ENCODE measurements at regions of chr3 and their contacts with region 1.

Region 1: DNA sequence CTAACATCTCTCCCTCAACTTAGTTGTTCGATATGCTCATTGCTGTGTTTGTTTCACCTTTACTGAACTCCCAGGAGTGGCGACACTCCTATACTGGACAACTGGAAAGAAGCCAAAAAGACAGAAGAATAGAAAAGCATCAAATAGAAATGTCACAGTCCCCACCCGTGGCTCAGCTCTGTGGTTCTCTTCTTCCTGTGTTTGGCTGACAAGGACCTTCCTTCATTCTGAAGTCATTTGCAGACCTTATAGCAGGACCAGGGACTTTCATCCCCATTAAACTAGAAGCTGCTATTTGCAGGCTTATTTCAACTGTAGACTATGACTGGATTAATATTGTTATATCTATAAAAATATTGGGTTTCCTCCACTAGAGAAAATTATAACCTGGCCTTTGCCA is 125.9 kb downstream of the NECTIN3 start:
- DNase-seq: no peak
- ATAC-seq: no peak
- H3K4me3 ChIP-seq: no peak overlapping the region
- H3K4me3 Mint-ChIP-seq: no peak overlapping the region
- H3K27ac ChIP-seq: no peak overlapping the region
- H3K27ac Mint-ChIP-seq: no peak overlapping the region
- H3K4me1 ChIP-seq: peaks cover 3% of the 10 kb centered on the region
- H3K4me1 Mint-ChIP-seq: peaks cover 6% of the 10 kb centered on the region
- H3K27me3 ChIP-seq: no peaks in the 10 kb centered on the region
- H3K27me3 Mint-ChIP-seq: no peaks in the 10 kb centered on the region
- CTCF ChIP-seq: no peak

Region 2: GRCh38 chr3:111238885-111239284 is 41.4 kb after region 1 on chr3:
- CTCF ChIA-PET with region 1: no interaction called
- POLR2A ChIA-PET with region 1: no interaction called
- intact Hi-C with region 1: loop called in 1 of 2 experiments (anchors 5 kb)
- DNase-seq: peak in 2 of 9 experiments; percentile 43 to 69
- ATAC-seq: peak; percentile 75
- H3K4me3 ChIP-seq: no peak overlapping the region
- H3K4me3 Mint-ChIP-seq: peak overlapping the region; percentile 19
- H3K27ac ChIP-seq: peak overlapping the region in 1 of 2 experiments; percentile 28
- H3K27ac Mint-ChIP-seq: peak overlapping the region; percentile 35
- H3K4me1 ChIP-seq: peaks cover 23% of the 10 kb centered on the region
- H3K4me1 Mint-ChIP-seq: peaks cover 44% of the 10 kb centered on the region
- H3K27me3 ChIP-seq: no peaks in the 10 kb centered on the region
- H3K27me3 Mint-ChIP-seq: no peaks in the 10 kb centered on the region
- CTCF ChIP-seq: no peak

Region 3: DNA sequence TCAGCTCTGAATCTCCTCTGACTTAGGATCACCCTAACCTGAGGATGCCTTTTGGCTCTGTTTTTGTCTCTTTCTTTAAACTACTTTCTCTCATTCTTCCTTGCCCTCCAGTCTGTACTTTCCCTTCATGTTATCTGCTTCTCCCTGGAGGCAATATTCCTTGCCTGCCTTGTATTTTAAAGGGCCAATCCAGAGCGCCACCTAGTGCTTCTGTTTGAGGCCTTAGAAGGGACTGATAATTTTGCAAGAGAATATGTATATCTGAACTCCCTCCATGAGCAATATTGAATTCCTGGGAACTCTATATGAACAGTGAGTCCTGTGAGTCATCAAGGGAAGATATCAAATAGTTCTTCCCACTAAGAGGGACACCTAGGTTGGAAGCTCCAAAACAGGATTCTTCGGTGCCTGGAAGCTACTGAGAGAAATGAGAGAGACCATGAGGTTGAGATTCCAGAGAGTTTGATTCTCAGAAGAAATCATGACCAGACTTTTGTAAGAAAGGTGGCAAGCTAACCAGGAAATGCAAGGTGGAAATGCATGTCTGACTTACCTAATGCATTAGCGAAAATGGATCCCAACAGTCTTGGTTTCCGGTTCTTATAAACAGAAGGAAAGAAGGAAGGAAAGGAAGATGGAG is 140.7 kb after region 1 on chr3:
- CTCF ChIA-PET with region 1: no interaction called
- POLR2A ChIA-PET with region 1: no interaction called
- intact Hi-C with region 1: no loop called
- DNase-seq: peak in 8 of 9 experiments; percentile 11 to 63 (median 40)
- ATAC-seq: no peak
- H3K4me3 ChIP-seq: no peak overlapping the region
- H3K4me3 Mint-ChIP-seq: no peak overlapping the region
- H3K27ac ChIP-seq: no peak overlapping the region
- H3K27ac Mint-ChIP-seq: no peak overlapping the region
- H3K4me1 ChIP-seq: no peaks in the 10 kb centered on the region
- H3K4me1 Mint-ChIP-seq: peaks cover 10% of the 10 kb centered on the region
- H3K27me3 ChIP-seq: no peaks in the 10 kb centered on the region
- H3K27me3 Mint-ChIP-seq: no peaks in the 10 kb centered on the region
- CTCF ChIP-seq: peak; percentile 53

Measured in CD8-positive, alpha-beta T cell (primary cell).